CD4-positive, alpha-beta T cell (primary cell): ENCODE measurements at regions of chrX and their contacts with region 1.

Region 1: DNA sequence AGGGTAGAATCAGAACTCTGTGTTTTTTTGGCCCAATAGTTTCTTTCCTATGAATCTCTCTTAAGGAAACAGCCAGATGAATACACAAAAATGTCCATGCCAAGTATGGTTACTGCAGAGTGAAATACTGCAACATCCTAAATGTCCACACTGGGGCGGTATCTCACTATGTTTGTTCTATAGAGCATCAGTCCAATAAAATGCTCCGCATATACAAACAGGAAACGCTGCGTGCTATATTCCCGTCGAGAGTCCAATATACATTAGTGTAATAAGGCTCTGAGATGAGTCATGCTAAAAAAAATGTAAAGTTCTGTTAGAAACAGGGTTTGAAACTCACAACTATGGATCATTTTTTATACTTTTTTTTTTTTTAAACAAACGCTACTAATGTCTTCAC is 72.9 kb upstream of the ENOX2 start:
- DNase-seq: peak in 6 of 14 experiments; percentile 1 to 38 (median 37)
- ATAC-seq: peak; percentile 60
- H3K4me3 ChIP-seq: no peak overlapping the region
- H3K4me3 Mint-ChIP-seq: no peak overlapping the region
- H3K27ac ChIP-seq: no peak overlapping the region
- H3K27ac Mint-ChIP-seq: no peak overlapping the region
- H3K4me1 ChIP-seq: no peaks in the 10 kb centered on the region
- H3K4me1 Mint-ChIP-seq: no peaks in the 10 kb centered on the region
- H3K27me3 ChIP-seq: no peaks in the 10 kb centered on the region
- H3K27me3 Mint-ChIP-seq: no peaks in the 10 kb centered on the region
- CTCF ChIP-seq: peak; percentile 45

Region 2: DNA sequence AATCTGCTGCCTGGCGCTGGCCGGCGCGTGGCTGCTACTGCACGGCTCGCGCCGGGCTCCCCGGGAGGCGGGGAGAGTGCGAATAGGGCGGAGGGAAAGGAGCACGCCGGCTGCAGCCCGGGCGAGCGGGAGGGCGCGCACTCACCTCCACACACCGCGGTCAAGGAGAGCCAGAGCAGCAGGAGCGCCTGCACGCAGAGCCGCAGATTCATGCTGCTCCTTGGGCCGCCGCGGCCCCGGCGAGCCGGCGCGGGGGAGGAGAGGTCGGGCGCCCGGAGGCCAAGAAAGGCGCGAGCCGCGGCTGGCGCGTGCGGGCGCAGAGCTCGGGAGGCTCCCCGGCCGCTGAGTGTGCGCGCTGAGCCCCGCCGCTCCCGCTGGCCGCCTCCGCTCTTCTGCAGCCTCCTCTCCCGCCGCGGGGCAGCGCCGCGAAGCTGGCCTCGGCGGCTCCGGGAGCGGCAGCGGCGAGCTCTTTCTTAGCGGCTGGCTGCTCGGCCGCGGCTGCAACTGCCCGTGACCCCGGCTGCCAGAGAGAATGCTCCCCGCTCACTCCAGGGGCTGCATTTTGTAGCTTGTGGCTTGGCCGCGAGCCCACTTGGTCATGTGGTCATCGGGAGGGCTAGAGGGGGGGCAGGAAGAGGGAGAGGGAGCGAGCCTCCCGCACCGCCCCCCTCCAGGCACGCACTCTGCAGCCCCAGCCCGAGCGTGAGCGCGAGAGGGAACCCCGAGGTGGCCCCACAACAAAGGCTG is 1321.4 kb before region 1 on chrX and contains the start of gene APLN:
- CTCF ChIA-PET with region 1: no interaction called
- POLR2A ChIA-PET with region 1: no interaction called
- intact Hi-C with region 1: no loop called
- DNase-seq: peak in 4 of 14 experiments; percentile 4 to 36 (median 30)
- ATAC-seq: peak; percentile 68
- H3K4me3 ChIP-seq: peak within 1 kb of the TSS; percentile 42
- H3K4me3 Mint-ChIP-seq: peak within 1 kb of the TSS; percentile 67
- H3K27ac ChIP-seq: no peak within 1 kb of the TSS
- H3K27ac Mint-ChIP-seq: no peak within 1 kb of the TSS
- H3K4me1 ChIP-seq: peaks cover 15% of the 10 kb centered on the region
- H3K4me1 Mint-ChIP-seq: peaks cover 9% of the 10 kb centered on the region
- H3K27me3 ChIP-seq: peaks cover 4 to 16% of the 10 kb centered on the region in 2 experiments
- H3K27me3 Mint-ChIP-seq: peaks cover 14% of the 10 kb centered on the region
- CTCF ChIP-seq: no peak
- total RNA-seq, gene APLN: not detected

Region 3: DNA sequence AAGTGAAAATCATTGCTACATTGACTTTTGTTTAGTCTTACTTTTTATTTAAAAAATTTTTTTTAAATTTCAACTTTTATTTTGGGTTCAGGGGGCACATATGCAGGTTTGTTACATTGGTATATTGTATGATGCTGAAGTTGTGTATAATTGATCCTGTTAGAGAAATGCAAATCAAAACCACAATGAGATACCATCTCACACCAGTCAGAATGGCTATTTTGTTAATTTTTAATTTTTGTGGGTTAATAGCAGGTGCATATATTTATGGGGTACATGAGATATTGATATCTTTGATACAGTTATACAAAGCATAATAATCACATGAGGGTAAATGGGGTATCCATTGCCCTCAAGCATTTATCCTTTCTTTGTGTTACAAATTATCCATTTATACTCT is 540.0 kb before region 1 on chrX:
- CTCF ChIA-PET with region 1: no interaction called
- POLR2A ChIA-PET with region 1: no interaction called
- intact Hi-C with region 1: no loop called
- DNase-seq: no peak
- ATAC-seq: no peak
- H3K4me3 ChIP-seq: no peak overlapping the region
- H3K4me3 Mint-ChIP-seq: no peak overlapping the region
- H3K27ac ChIP-seq: no peak overlapping the region
- H3K27ac Mint-ChIP-seq: no peak overlapping the region
- H3K4me1 ChIP-seq: no peaks in the 10 kb centered on the region
- H3K4me1 Mint-ChIP-seq: no peaks in the 10 kb centered on the region
- H3K27me3 ChIP-seq: no peaks in the 10 kb centered on the region
- H3K27me3 Mint-ChIP-seq: no peaks in the 10 kb centered on the region
- CTCF ChIP-seq: no peak

Region 4: DNA sequence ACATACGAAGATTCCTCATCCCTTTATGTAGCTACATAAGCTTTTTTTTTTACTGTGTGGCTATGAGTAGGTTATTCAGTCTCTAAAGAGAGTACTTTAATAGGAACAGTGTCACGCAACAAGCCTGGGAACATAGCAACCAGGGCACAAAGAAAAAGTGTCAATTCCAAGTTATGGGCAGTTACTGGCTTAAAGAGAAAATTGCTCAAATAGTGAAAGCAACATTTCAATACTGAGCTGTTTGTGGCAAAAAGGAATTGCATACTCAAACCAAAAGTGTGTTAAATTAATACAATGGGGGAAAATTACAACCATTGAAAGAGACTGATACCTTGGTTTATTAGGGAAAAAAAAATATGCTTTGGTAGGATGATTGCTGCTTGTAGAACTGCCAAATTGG is 31.7 kb before region 1 on chrX:
- CTCF ChIA-PET with region 1: no interaction called
- POLR2A ChIA-PET with region 1: no interaction called
- intact Hi-C with region 1: loop called in 1 of 2 experiments (anchors 2 kb)
- DNase-seq: no peak
- ATAC-seq: no peak
- H3K4me3 ChIP-seq: no peak overlapping the region
- H3K4me3 Mint-ChIP-seq: no peak overlapping the region
- H3K27ac ChIP-seq: no peak overlapping the region
- H3K27ac Mint-ChIP-seq: no peak overlapping the region
- H3K4me1 ChIP-seq: no peaks in the 10 kb centered on the region
- H3K4me1 Mint-ChIP-seq: no peaks in the 10 kb centered on the region
- H3K27me3 ChIP-seq: peaks cover 0 to 7% of the 10 kb centered on the region in 2 experiments
- H3K27me3 Mint-ChIP-seq: peaks cover 24% of the 10 kb centered on the region
- CTCF ChIP-seq: no peak

Region 5: DNA sequence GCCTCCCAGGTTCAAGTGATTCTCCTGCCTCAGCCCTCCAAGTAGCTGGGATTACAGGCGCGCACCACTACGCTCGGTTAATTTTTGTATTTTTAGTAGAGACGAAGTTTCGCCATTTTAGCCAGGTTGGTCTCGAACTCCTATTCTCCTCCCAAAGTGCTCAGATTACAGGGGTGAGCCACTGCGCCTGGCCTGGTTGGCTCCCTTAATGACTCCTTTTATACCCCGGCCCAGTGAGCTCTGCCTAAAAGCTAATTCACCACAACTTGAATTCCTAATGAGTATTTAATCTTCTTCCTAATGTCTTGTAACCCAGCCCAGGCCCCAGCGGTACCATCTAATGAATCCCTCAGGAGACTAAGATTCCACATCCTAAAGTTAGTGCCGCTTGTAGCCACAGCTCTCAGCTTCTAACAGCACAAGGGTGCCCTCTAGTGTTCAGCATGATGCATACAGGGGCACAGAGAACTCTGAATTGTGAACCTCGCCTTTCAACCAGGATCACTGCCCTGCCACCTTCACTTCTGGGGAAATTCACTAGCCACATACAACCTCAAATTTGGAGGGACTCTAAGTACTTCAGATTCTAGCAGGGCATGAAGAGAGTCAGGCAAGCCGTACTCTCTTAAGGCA is 657.5 kb after region 1 on chrX:
- CTCF ChIA-PET with region 1: no interaction called
- POLR2A ChIA-PET with region 1: no interaction called
- intact Hi-C with region 1: loop called (anchors 2 to 5 kb)
- DNase-seq: peak in 13 of 14 experiments; percentile 1 to 56 (median 11)
- ATAC-seq: peak; percentile 32
- H3K4me3 ChIP-seq: no peak overlapping the region
- H3K4me3 Mint-ChIP-seq: no peak overlapping the region
- H3K27ac ChIP-seq: no peak overlapping the region
- H3K27ac Mint-ChIP-seq: no peak overlapping the region
- H3K4me1 ChIP-seq: no peaks in the 10 kb centered on the region
- H3K4me1 Mint-ChIP-seq: no peaks in the 10 kb centered on the region
- H3K27me3 ChIP-seq: no peaks in the 10 kb centered on the region
- H3K27me3 Mint-ChIP-seq: peaks cover 5% of the 10 kb centered on the region
- CTCF ChIP-seq: peak; percentile 73

Region 6: DNA sequence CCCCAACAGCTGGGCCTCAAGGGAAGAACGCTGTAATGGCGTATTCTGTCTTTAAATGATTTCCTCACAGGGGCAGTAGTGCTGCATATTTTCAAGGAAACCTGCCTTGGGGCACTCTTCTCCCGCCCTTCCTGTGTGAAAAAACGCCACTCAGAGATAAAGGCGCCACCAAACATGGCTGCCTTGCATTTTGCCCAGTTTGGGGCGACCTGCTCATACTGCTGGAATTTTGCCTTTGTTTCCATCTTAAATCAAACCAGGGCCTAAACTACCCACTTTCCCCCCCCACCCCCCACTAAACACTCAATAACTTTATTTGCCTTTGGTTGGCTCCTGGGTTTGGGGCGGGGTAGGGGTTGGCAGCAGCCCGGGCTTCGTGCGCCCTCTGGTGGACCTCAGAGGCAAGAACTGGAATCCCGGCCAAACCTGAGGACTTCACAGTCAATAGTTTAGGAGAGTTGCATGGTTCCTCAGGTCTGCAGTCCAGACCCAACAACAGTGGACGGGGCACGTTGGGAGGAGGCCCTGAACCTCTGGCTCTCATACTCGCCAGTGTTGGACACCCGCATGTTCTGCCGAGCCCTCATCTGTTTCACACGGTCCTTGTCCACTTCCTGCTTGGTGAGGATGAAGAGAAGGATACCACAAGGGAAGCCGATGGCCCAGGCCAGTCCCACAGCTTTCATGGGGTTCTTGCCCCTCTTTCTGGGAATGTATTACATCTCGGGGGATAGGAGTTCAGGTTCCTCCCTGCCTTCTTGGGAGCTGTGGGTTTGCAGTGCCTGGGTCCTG is 827.1 kb after region 1 on chrX:
- CTCF ChIA-PET with region 1: no interaction called
- POLR2A ChIA-PET with region 1: no interaction called
- intact Hi-C with region 1: loop called in 1 of 2 experiments (anchors 10 kb)
- DNase-seq: peak in 8 of 14 experiments; percentile 10 to 84 (median 60)
- ATAC-seq: no peak
- H3K4me3 ChIP-seq: no peak overlapping the region
- H3K4me3 Mint-ChIP-seq: no peak overlapping the region
- H3K27ac ChIP-seq: no peak overlapping the region
- H3K27ac Mint-ChIP-seq: no peak overlapping the region
- H3K4me1 ChIP-seq: peaks cover 2% of the 10 kb centered on the region
- H3K4me1 Mint-ChIP-seq: no peaks in the 10 kb centered on the region
- H3K27me3 ChIP-seq: no peaks in the 10 kb centered on the region
- H3K27me3 Mint-ChIP-seq: no peaks in the 10 kb centered on the region
- CTCF ChIP-seq: no peak